GM18951 (cell line): ENCODE measurements at regions of chr4 and their contacts with region 1.

Region 1: GRCh38 chr4:87679449-87680169 is 29.5 kb downstream of the DMP1 start:
- POLR2A ChIP-seq: no peak

Region 2: GRCh38 chr4:88211473-88212252 is 532.1 kb after region 1 on chr4:
- in situ Hi-C with region 1: loop called (anchors 25 kb)
- POLR2A ChIP-seq: no peak